ENCODE measurements at regions of chr14 and their contacts with region 1.

Region 1: DNA sequence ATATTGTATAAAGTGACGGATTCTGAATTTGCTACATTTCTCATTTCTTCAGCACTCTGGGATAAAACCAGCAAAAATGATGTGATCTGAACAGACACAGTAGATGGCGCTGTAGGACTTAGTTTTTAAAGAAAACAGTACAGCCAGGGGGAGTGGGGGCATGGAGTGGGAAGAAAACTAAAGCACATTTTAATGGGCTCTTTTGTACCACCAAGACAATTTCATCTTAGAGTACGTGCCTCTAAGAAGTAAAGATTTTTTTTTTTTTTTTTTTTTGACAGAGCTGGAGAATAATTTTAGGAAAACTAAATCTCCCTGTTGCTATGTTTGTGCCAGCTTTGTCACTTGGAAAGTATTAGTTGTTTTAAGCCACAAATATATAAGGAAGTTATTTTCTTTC is 124.4 kb downstream of the RAD51B start:
- DNase-seq: peak; percentile 54 to 67
- H3K4me3 ChIP-seq: no peak overlapping the region
- H3K27ac ChIP-seq: peak overlapping the region; percentile 37
- H3K4me1 ChIP-seq: peaks cover 43% of the 10 kb centered on the region
- H3K27me3 ChIP-seq: no peaks in the 10 kb centered on the region
- CTCF ChIP-seq: peak; percentile 91

Region 2: GRCh38 chr14:67990576-67990975 is 46.6 kb after region 1 on chr14:
- CTCF ChIA-PET with region 1: no interaction called
- POLR2A ChIA-PET with region 1: no interaction called
- intact Hi-C with region 1: no loop called
- DNase-seq: no peak
- H3K4me3 ChIP-seq: no peak overlapping the region
- H3K27ac ChIP-seq: no peak overlapping the region
- H3K4me1 ChIP-seq: no peaks in the 10 kb centered on the region
- H3K27me3 ChIP-seq: no peaks in the 10 kb centered on the region
- CTCF ChIP-seq: no peak

Region 3: GRCh38 chr14:68020999-68021663 is 77.2 kb after region 1 on chr14:
- CTCF ChIA-PET with region 1: no interaction called
- POLR2A ChIA-PET with region 1: no interaction called
- intact Hi-C with region 1: no loop called
- DNase-seq: no peak
- H3K4me3 ChIP-seq: no peak overlapping the region
- H3K27ac ChIP-seq: no peak overlapping the region
- H3K4me1 ChIP-seq: no peaks in the 10 kb centered on the region
- H3K27me3 ChIP-seq: no peaks in the 10 kb centered on the region
- CTCF ChIP-seq: no peak

Region 4: DNA sequence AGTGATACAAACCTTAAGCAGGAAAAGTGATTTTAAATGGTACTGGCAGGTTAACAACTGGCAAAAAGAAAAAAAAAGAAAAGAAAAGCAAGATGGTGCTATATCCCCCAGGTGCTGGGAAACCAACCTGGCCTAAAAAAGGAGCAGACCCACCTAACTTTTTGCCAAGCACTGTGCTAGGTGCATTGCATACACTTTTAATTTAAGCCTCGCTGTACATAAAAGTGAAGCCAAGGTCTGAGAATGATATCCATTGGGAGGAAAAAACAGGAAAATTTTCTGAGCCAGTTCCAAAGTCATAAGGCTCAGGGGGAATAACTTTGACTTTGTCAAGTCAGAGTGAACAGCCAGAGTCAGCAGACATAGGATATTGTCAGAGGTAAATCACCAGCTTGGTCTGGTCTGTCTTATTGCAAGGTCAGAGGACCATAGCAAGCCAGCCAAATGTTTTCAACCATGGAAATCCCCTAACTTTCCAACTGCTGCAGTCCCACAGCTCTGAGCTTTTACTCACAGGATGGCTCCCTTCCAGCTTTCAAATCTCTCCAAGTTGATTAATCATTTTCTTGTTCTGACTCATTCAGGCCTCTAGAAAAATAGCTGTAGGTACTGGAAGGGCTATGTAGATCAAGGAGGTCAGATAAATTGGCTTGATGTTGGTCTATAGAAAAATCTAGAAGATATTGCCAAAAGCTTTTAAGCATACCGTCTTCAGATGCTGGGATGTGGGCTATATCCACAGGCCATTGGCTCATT is 288.5 kb after region 1 on chr14:
- CTCF ChIA-PET with region 1: interaction called, 5 read pairs
- POLR2A ChIA-PET with region 1: no interaction called
- intact Hi-C with region 1: loop called (anchors 5 kb)
- DNase-seq: peak; percentile 72 to 96
- H3K4me3 ChIP-seq: no peak overlapping the region
- H3K27ac ChIP-seq: peak overlapping the region; percentile 91
- H3K4me1 ChIP-seq: peaks cover 44% of the 10 kb centered on the region
- H3K27me3 ChIP-seq: no peaks in the 10 kb centered on the region
- CTCF ChIP-seq: no peak

Region 5: DNA sequence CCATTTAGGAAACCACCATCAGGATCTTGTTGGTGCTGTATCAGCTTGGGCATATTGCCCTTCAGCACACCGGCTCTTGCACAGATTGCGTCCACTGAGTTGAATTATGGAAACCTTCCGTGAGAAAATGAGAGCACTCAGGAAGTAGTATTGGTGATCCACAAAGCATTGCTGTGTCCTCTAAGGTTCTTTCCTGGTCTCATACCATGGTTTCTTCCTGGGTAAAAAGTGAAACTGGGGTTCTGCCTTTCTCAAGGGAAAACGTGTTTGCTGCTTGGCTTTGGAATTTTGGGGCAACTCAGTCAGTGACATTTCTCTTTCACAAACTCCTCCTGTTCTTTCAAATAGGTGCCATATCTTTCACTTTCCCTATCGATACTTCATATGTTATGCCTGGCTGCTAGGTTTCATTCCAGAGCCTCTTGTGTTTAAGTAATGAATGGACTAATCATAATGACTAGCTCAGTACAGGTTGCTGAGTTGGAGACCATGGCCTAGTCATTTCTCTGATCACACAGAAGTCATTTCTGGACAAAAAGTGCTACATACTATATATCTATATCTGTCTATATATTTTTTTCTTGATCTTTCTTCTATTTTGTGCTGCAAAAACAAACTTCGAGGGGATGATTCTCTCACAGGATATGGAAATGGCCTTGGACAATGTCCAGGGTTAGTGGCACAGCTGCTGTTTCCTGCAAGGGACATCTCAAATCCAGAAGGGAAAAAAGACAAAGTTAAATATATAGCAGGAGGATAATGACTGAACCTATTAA is 425.5 kb after region 1 on chr14:
- CTCF ChIA-PET with region 1: no interaction called
- POLR2A ChIA-PET with region 1: no interaction called
- intact Hi-C with region 1: loop called (anchors 5 kb)
- DNase-seq: no peak
- H3K4me3 ChIP-seq: no peak overlapping the region
- H3K27ac ChIP-seq: no peak overlapping the region
- H3K4me1 ChIP-seq: peaks cover 12% of the 10 kb centered on the region
- H3K27me3 ChIP-seq: no peaks in the 10 kb centered on the region
- CTCF ChIP-seq: no peak

Region 6: GRCh38 chr14:68816262-68816942 is 872.5 kb after region 1 on chr14:
- CTCF ChIA-PET with region 1: interaction called, 6 read pairs
- POLR2A ChIA-PET with region 1: no interaction called
- intact Hi-C with region 1: loop called (anchors 1 kb)
- DNase-seq: peak; percentile 69 to 92
- H3K4me3 ChIP-seq: peak overlapping the region; percentile 57
- H3K27ac ChIP-seq: peak overlapping the region; percentile 81
- H3K4me1 ChIP-seq: peaks cover 50% of the 10 kb centered on the region
- H3K27me3 ChIP-seq: no peaks in the 10 kb centered on the region
- CTCF ChIP-seq: peak; percentile 98

Region 7: GRCh38 chr14:68843471-68844209 is 899.7 kb after region 1 on chr14:
- CTCF ChIA-PET with region 1: interaction called, 5 read pairs
- POLR2A ChIA-PET with region 1: no interaction called
- intact Hi-C with region 1: loop called (anchors 5 kb)
- DNase-seq: peak in 1 of 2 experiments; percentile 74
- H3K4me3 ChIP-seq: no peak overlapping the region
- H3K27ac ChIP-seq: no peak overlapping the region
- H3K4me1 ChIP-seq: no peaks in the 10 kb centered on the region
- H3K27me3 ChIP-seq: no peaks in the 10 kb centered on the region
- CTCF ChIP-seq: peak; percentile 94